GM10248 (cell line): ENCODE measurements at regions of chr17 and their contacts with region 1.

Region 1: GRCh38 chr17:18319604-18320256 is 4.6 kb downstream of the SMCR8 start:
- DNase-seq: no peak
- CTCF ChIP-seq: peak; percentile 11

Region 2: GRCh38 chr17:18076936-18077335 is 242.8 kb before region 1 on chr17:
- CTCF ChIA-PET with region 1: no interaction called
- POLR2A ChIA-PET with region 1: no interaction called
- DNase-seq: no peak
- CTCF ChIP-seq: no peak

Region 3: DNA sequence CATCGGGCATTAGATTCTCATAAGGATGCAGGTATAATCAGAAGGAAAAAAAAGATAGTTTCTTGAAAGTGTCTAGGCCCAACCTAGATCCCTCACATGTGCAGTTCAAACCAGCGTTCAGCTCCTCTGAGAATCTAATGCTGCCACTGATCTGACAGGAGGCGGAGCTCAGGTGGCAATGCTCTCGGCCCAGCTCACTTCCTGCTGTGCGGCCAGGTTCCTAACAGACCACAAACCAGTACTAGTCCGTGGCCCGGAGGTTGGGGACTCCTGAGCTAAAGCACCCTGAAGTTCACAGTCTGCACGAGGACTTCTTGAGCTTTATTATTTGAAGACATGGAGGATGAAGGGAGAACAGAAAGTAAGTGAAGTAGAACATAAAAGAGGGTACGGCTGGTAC is 12.1 kb after region 1 on chr17:
- CTCF ChIA-PET with region 1: interaction called, 10 read pairs
- POLR2A ChIA-PET with region 1: interaction called, 8 read pairs
- DNase-seq: no peak
- CTCF ChIP-seq: no peak